ENCODE measurements at regions of chr3 and their contacts with region 1.

Region 1: DNA sequence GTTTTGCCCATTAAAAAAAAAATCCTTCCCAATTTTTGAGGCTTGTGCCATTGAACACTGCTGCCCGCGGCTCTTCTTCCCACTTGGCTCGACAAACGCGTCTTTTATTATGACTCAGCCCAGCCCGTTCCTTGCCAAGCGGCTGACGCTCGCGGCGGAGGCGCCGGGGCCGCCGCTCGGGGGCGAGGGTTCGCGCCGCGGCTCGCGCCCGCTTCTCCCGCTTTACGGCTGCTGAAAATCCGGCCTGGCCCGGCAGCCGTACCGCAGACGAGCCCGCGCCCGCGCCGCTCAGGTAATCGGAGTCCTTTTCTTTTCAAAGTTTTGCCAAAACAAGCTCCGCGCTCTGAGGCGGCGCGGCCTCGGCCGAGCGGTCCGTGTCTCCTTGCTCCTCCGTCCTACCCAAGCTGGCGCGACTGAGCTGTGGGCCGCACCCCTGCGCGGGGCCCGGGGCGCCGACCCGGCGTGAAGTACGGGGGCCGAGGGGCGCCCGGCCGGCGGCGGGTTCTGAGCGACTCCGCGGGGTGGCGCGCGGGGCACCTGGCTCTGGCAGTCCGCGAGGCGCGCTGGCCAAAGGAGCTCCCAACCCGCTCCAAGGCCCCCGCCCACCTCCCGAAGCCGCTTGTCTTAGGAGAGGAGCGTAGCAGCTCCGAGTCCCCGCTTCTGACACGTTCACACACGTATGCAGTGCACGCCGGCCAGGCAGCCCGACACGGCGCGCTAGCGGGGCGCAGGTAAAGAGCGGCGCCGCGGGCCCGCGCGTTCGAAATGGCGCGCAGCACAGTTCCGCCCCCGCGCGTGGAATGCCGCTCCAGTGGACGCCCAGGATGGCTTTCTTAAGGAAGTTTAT is 418.2 kb upstream of the NAALADL2 start:
- DNase-seq: peak; percentile 92
- ATAC-seq: peak; percentile 72
- H3K4me3 ChIP-seq: peak overlapping the region; percentile 73
- H3K27ac ChIP-seq: peak overlapping the region; percentile 96
- H3K4me1 ChIP-seq: peaks cover 8% of the 10 kb centered on the region
- H3K27me3 ChIP-seq: no peaks in the 10 kb centered on the region
- CTCF ChIP-seq: peak; percentile 21; the same call in 1 of the 2 replicates
- POLR2A ChIP-seq: peak; percentile 71; the same call in 1 of the 2 replicates
- RAD21 ChIP-seq: no peak; the same call in 1 of the 2 replicates

Region 2: GRCh38 chr3:173733029-173733652 is 707.8 kb before region 1 on chr3:
- CTCF ChIA-PET with region 1: no interaction called
- POLR2A ChIA-PET with region 1: no interaction called
- dilution Hi-C with region 1: no loop called
- in situ Hi-C with region 1: no loop called
- intact Hi-C with region 1: loop called (anchors 5 kb)
- DNase-seq: peak; percentile 64
- ATAC-seq: no peak
- H3K4me3 ChIP-seq: no peak overlapping the region
- H3K27ac ChIP-seq: no peak overlapping the region
- H3K4me1 ChIP-seq: peaks cover 2% of the 10 kb centered on the region; the same call in 1 of the 2 replicates
- H3K27me3 ChIP-seq: no peaks in the 10 kb centered on the region
- CTCF ChIP-seq: peak; percentile 50
- POLR2A ChIP-seq: no peak
- RAD21 ChIP-seq: peak; percentile 38

Region 3: DNA sequence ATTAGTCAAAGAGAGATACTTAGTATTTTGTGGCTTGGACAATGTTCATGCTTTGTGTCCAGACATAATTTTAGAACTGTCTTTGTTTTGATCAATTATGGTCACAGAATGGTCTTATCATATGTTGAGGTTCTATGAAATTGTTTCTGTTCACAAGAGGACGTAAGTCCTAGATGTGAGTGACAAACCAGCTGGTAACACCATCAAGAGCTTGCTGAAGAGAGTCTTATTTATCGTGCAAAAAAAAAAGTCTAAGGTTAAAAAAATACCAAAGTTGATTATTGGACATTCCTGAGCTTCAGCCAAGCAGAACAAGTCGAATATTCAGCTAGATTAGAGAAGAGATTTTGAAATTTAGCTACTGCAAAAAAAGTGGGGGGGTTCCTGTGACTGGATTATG is 77.7 kb before region 1 on chr3:
- CTCF ChIA-PET with region 1: no interaction called
- POLR2A ChIA-PET with region 1: interaction called, 24 read pairs
- dilution Hi-C with region 1: no loop called
- in situ Hi-C with region 1: no loop called
- intact Hi-C with region 1: no loop called
- DNase-seq: no peak
- ATAC-seq: no peak
- H3K4me3 ChIP-seq: no peak overlapping the region
- H3K27ac ChIP-seq: no peak overlapping the region
- H3K4me1 ChIP-seq: no peaks in the 10 kb centered on the region
- H3K27me3 ChIP-seq: no peaks in the 10 kb centered on the region
- CTCF ChIP-seq: no peak
- POLR2A ChIP-seq: no peak
- RAD21 ChIP-seq: no peak

Region 4: DNA sequence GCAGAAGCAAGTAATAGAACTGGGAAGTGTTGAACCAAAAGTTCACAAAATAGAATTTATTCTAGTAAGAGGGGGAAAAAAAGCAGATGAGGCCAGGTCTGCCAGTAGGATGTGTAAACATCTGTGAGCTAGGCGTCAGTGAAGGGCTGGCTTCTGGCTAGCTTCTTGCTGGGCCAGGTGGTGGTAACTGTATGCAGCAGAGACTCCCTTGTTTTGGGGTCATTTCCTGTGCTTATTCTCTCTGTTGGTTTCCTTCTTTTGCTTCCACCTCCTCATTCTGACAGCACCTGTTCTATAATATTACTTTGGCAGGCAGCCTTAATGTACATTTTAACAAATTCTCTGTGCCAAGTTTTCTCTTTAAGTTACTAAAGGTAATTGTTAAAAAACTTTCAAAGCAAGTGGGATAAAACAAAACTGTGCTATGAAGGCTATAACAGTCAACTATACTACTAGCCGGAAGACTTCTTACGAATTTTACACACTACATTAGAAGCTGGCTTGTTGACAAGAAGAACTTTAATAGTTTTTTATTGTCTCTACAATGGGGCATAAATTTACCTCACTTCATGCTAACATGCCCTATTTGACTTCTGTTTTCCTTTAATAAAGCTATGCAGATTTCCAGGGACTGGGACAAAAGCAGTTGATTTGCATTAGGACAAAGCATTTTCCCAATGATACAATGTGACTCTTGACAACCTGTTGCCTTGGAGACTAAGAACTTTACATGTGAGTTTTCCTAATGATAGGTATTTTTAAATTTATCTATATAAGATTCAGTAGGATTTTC is 99.3 kb after region 1 on chr3:
- CTCF ChIA-PET with region 1: no interaction called
- POLR2A ChIA-PET with region 1: no interaction called
- dilution Hi-C with region 1: no loop called
- in situ Hi-C with region 1: no loop called
- intact Hi-C with region 1: no loop called
- DNase-seq: no peak
- ATAC-seq: no peak
- H3K4me3 ChIP-seq: no peak overlapping the region
- H3K27ac ChIP-seq: no peak overlapping the region
- H3K4me1 ChIP-seq: no peaks in the 10 kb centered on the region
- H3K27me3 ChIP-seq: no peaks in the 10 kb centered on the region
- CTCF ChIP-seq: no peak
- POLR2A ChIP-seq: no peak
- RAD21 ChIP-seq: no peak

Region 5: GRCh38 chr3:174614036-174614435 is 173.1 kb after region 1 on chr3:
- CTCF ChIA-PET with region 1: no interaction called
- POLR2A ChIA-PET with region 1: no interaction called
- dilution Hi-C with region 1: no loop called
- in situ Hi-C with region 1: no loop called
- intact Hi-C with region 1: no loop called
- DNase-seq: no peak
- ATAC-seq: no peak
- H3K4me3 ChIP-seq: no peak overlapping the region
- H3K27ac ChIP-seq: no peak overlapping the region
- H3K4me1 ChIP-seq: no peaks in the 10 kb centered on the region
- H3K27me3 ChIP-seq: no peaks in the 10 kb centered on the region
- CTCF ChIP-seq: no peak
- POLR2A ChIP-seq: no peak
- RAD21 ChIP-seq: no peak

Region 6: GRCh38 chr3:174949526-174949925 is 508.6 kb after region 1 on chr3:
- CTCF ChIA-PET with region 1: no interaction called
- POLR2A ChIA-PET with region 1: interaction called, 3 read pairs
- dilution Hi-C with region 1: no loop called
- in situ Hi-C with region 1: loop called (anchors 10 kb)
- intact Hi-C with region 1: loop called (anchors 2 kb)
- DNase-seq: peak; percentile 97
- ATAC-seq: peak; percentile 72
- H3K4me3 ChIP-seq: no peak overlapping the region
- H3K27ac ChIP-seq: peak overlapping the region; percentile 86
- H3K4me1 ChIP-seq: peaks cover 11% of the 10 kb centered on the region
- H3K27me3 ChIP-seq: no peaks in the 10 kb centered on the region
- CTCF ChIP-seq: no peak
- POLR2A ChIP-seq: no peak
- RAD21 ChIP-seq: peak; percentile 10; the same call in 1 of the 2 replicates

Region 7: GRCh38 chr3:175144368-175144767 is 703.4 kb after region 1 on chr3:
- CTCF ChIA-PET with region 1: interaction called, 3 read pairs
- POLR2A ChIA-PET with region 1: no interaction called
- dilution Hi-C with region 1: no loop called
- in situ Hi-C with region 1: no loop called
- intact Hi-C with region 1: loop called (anchors 2 kb)
- DNase-seq: no peak
- ATAC-seq: no peak
- H3K4me3 ChIP-seq: no peak overlapping the region
- H3K27ac ChIP-seq: no peak overlapping the region
- H3K4me1 ChIP-seq: no peaks in the 10 kb centered on the region
- H3K27me3 ChIP-seq: no peaks in the 10 kb centered on the region
- CTCF ChIP-seq: no peak
- POLR2A ChIP-seq: no peak
- RAD21 ChIP-seq: no peak

Region 8: DNA sequence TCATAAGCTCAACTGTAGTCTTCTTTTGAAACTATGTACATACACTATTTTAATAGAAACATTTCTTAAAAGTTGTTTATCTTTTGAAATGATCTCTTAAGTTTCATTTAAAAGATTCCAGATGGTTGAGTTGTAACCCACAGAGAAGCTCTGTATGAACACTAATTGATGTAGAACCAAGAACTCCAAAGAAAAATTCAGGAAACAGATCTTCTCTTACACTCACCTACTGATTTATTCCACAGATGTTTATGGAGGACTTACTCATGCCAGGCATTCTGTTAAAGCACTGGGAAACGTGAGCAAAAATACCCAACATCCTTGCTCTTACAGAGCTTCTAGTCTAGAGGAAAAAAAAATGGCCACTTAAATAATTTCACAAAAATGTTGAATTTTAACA is 969.3 kb after region 1 on chr3:
- CTCF ChIA-PET with region 1: no interaction called
- POLR2A ChIA-PET with region 1: no interaction called
- dilution Hi-C with region 1: no loop called
- in situ Hi-C with region 1: no loop called
- intact Hi-C with region 1: loop called (anchors 5 kb)
- DNase-seq: peak; percentile 89
- ATAC-seq: peak; percentile 79
- H3K4me3 ChIP-seq: no peak overlapping the region
- H3K27ac ChIP-seq: peak overlapping the region; percentile 68; the same call in 1 of the 2 replicates
- H3K4me1 ChIP-seq: peaks cover 11% of the 10 kb centered on the region
- H3K27me3 ChIP-seq: no peaks in the 10 kb centered on the region
- CTCF ChIP-seq: no peak
- POLR2A ChIP-seq: no peak
- RAD21 ChIP-seq: no peak